ENCODE measurements at regions of chr12 and their contacts with region 1.

Region 1: GRCh38 chr12:40312982-40313576 is 88.3 kb downstream of the LRRK2 start:
- DNase-seq: no peak
- ATAC-seq: no peak

Region 2: DNA sequence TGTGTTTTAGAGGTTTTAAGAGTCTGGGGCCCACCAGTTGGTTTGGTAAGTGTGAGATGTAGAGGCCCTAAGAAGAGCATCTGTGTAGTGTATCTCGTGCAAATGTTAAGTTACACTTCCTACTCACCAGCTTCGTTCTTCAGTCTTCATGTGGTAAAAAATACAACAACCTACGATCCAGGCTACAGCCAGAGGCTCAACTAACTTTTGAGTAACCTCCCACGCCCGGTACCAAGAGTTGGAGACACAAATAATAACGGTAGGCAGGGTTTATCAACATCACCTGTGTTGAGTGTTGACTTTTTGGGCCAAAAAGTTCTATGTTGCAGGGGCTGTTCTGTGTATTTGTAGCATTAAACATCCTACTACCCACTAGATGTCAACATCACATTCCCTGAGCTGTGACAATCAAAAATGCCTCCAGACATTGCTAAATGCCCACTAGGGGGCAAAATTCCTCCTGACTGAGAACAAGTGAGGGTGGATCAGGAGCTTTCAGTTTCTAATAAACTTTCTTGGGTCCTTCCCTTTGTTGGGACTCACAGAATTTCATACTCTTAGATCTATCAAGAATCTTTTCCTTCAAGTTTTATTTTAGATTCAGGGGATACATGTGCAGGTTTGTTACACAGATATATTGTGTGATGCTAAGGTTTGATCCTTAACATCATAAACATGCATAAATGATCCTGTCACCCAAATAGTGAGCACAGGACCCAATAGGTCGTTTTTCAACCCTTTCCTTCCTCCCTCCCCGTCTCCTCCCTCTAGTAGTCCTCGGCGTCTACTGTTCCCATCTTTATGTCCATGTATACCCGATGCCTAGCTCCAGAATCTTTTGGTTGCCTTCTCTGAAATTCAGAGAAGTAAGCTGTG is 301.9 kb before region 1 on chr12:
- intact Hi-C with region 1: no loop called
- DNase-seq: peak; percentile 43 to 56
- ATAC-seq: peak; percentile 67

Region 3: GRCh38 chr12:40152783-40153383 is 160.2 kb before region 1 on chr12:
- intact Hi-C with region 1: loop called in 1 of 2 experiments (anchors 10 kb)
- DNase-seq: peak in 1 of 2 donors; percentile 49
- ATAC-seq: peak; percentile 33

Region 4: DNA sequence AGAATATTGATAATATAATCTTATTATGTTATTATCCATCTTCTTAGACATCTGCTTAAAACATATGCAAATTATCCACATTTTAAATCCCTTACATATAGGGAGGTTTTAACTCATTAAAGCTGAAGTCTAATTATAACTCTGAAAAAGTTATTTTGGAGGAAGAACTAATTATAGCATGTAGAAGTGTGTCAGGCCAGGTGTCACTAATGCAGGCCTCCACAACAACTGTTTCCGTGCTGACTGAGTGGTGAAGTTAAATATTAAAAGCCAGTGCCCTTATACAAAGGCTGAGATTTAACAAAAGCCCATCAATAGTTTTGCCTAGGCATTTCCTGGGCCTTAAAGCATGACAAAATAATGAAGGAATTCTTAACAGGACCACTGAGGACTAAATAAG is 69.1 kb after region 1 on chr12:
- intact Hi-C with region 1: no loop called
- DNase-seq: no peak
- ATAC-seq: no peak

Measured in left colon (tissue), 2 donors.